ENCODE measurements at regions of chr1 and their contacts with region 1.

Region 1: GRCh38 chr1:212455803-212456528 is 23.2 kb downstream of the NENF start:
- DNase-seq: peak; percentile 71 to 98
- H3K4me3 ChIP-seq: no peak overlapping the region
- H3K27ac ChIP-seq: no peak overlapping the region
- H3K4me1 ChIP-seq: peaks cover 0 to 4% (median under 1%) of the 10 kb centered on the region in 4 experiments; a peak in 2 of 7 replicates
- H3K27me3 ChIP-seq: no peaks in the 10 kb centered on the region
- CTCF ChIP-seq: peak; percentile 86 to 92 (median 90)
- EP300 ChIP-seq: no peak
- POLR2A ChIP-seq: no peak
- RAD21 ChIP-seq: peak; percentile 98

Region 2: GRCh38 chr1:212062832-212063438 is 393.0 kb before region 1 on chr1:
- CTCF ChIA-PET with region 1: interaction called, 13 read pairs
- POLR2A ChIA-PET with region 1: no interaction called
- DNase-seq: no peak
- H3K4me3 ChIP-seq: no peak overlapping the region
- H3K27ac ChIP-seq: no peak overlapping the region
- H3K4me1 ChIP-seq: no peaks in the 10 kb centered on the region
- H3K27me3 ChIP-seq: no peaks in the 10 kb centered on the region
- CTCF ChIP-seq: peak in 2 of 3 experiments; percentile 10 to 35; a peak in 2 of 4 replicates
- EP300 ChIP-seq: no peak
- POLR2A ChIP-seq: no peak
- RAD21 ChIP-seq: peak; percentile 17 to 28; a peak in 3 of 4 replicates

Region 3: DNA sequence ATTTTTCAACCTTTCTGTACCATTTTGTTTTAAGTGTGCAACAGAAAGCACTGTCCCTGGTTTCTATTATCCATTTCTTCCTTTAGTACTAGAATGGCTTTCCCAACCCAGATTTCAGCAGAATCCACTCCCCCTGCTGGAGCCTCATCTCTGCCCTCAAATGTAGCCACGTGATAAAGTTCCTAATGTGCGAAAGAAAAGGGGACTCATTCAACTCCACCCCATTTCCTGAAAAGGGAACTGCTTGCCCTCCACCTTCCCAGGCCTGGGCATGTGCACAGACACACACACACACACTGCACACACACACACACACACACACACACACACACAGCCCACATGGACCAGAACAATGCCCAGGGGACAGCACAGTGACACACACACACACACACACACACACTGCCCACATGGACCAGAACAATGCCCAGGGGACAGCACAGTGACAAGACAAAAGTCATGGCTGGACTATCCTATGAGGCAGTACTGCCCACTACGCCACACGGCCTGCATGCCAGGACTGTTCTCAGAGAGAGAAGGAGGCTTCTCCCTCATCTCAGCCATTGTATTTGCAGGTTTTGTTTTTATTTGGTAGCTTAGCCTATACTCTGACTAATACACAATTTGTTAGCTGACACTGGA is 74.5 kb before region 1 on chr1:
- CTCF ChIA-PET with region 1: interaction called, 54 read pairs
- POLR2A ChIA-PET with region 1: no interaction called
- DNase-seq: no peak
- H3K4me3 ChIP-seq: no peak overlapping the region
- H3K27ac ChIP-seq: no peak overlapping the region
- H3K4me1 ChIP-seq: no peaks in the 10 kb centered on the region; a peak in 1 of 7 replicates
- H3K27me3 ChIP-seq: no peaks in the 10 kb centered on the region; a peak in 1 of 7 replicates
- CTCF ChIP-seq: peak in 1 of 3 experiments; percentile 2; a peak in 1 of 4 replicates
- EP300 ChIP-seq: no peak
- POLR2A ChIP-seq: no peak
- RAD21 ChIP-seq: no peak

Region 4: GRCh38 chr1:212469701-212470458 is 13.9 kb after region 1 on chr1:
- CTCF ChIA-PET with region 1: interaction called, 143 read pairs
- POLR2A ChIA-PET with region 1: interaction called, 3 read pairs
- DNase-seq: no peak
- H3K4me3 ChIP-seq: no peak overlapping the region
- H3K27ac ChIP-seq: no peak overlapping the region
- H3K4me1 ChIP-seq: no peaks in the 10 kb centered on the region; a peak in 1 of 7 replicates
- H3K27me3 ChIP-seq: no peaks in the 10 kb centered on the region
- CTCF ChIP-seq: no peak
- EP300 ChIP-seq: no peak
- POLR2A ChIP-seq: no peak
- RAD21 ChIP-seq: no peak

Region 5: DNA sequence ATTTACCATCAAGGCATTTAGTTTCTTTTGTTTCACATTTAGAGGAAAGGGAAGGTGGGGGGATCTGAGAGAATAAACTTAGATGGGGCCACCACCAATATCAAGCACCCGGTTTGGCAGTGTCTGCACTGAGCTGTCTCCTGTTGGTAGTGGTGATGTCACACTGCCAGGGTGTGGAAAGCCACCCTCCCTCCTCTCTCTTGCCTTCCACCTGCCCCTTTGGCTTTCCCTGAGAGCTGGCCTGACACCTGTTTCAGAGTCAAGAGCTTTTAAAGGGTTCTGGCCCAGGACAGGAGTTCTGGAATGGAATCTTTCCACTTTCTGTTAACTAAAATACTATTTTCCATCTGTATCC is 166.0 kb after region 1 on chr1:
- CTCF ChIA-PET with region 1: interaction called, 15 read pairs
- POLR2A ChIA-PET with region 1: no interaction called
- DNase-seq: no peak
- H3K4me3 ChIP-seq: no peak overlapping the region
- H3K27ac ChIP-seq: no peak overlapping the region
- H3K4me1 ChIP-seq: no peaks in the 10 kb centered on the region
- H3K27me3 ChIP-seq: no peaks in the 10 kb centered on the region
- CTCF ChIP-seq: no peak
- EP300 ChIP-seq: no peak
- POLR2A ChIP-seq: no peak
- RAD21 ChIP-seq: no peak

Region 6: GRCh38 chr1:212699104-212699624 is 243.2 kb after region 1 on chr1:
- CTCF ChIA-PET with region 1: interaction called, 16 read pairs
- POLR2A ChIA-PET with region 1: no interaction called
- DNase-seq: peak; percentile 33 to 84
- H3K4me3 ChIP-seq: peak overlapping the region; percentile 29 to 69 (median 34)
- H3K27ac ChIP-seq: no peak overlapping the region
- H3K4me1 ChIP-seq: peaks cover 5 to 8% (median 7%) of the 10 kb centered on the region in 4 experiments; a peak in 6 of 7 replicates
- H3K27me3 ChIP-seq: peaks cover 31 to 58% (median 47%) of the 10 kb centered on the region in 4 experiments
- CTCF ChIP-seq: peak; percentile 63 to 86 (median 66)
- EP300 ChIP-seq: no peak
- POLR2A ChIP-seq: no peak
- RAD21 ChIP-seq: peak; percentile 47 to 60

Measured in H1 (cell line).